CD4-positive, alpha-beta T cell (primary cell): ENCODE measurements at regions of chr11 and their contacts with region 1.

Region 1: GRCh38 chr11:44556735-44557409 is 8.6 kb upstream of the CD82 start:
- DNase-seq: peak; percentile 57 to 83 (median 64)
- ATAC-seq: peak; percentile 71
- H3K4me3 ChIP-seq: no peak overlapping the region
- H3K4me3 Mint-ChIP-seq: no peak overlapping the region
- H3K27ac ChIP-seq: no peak overlapping the region
- H3K27ac Mint-ChIP-seq: peak overlapping the region; percentile 37
- H3K4me1 ChIP-seq: peaks cover 20% of the 10 kb centered on the region
- H3K4me1 Mint-ChIP-seq: peaks cover 35% of the 10 kb centered on the region
- H3K27me3 ChIP-seq: no peaks in the 10 kb centered on the region
- H3K27me3 Mint-ChIP-seq: no peaks in the 10 kb centered on the region
- CTCF ChIP-seq: peak; percentile 86

Region 2: GRCh38 chr11:44611687-44612434 is 55.0 kb after region 1 on chr11:
- CTCF ChIA-PET with region 1: interaction called, 168 read pairs
- POLR2A ChIA-PET with region 1: interaction called, 7 read pairs
- intact Hi-C with region 1: loop called (anchors 1 kb)
- DNase-seq: peak; percentile 19 to 89 (median 62)
- ATAC-seq: peak; percentile 83
- H3K4me3 ChIP-seq: no peak overlapping the region
- H3K4me3 Mint-ChIP-seq: peak overlapping the region; percentile 11
- H3K27ac ChIP-seq: peak overlapping the region; percentile 49 to 66
- H3K27ac Mint-ChIP-seq: peak overlapping the region; percentile 82
- H3K4me1 ChIP-seq: peaks cover 97% of the 10 kb centered on the region
- H3K4me1 Mint-ChIP-seq: peaks cover 84% of the 10 kb centered on the region
- H3K27me3 ChIP-seq: no peaks in the 10 kb centered on the region
- H3K27me3 Mint-ChIP-seq: no peaks in the 10 kb centered on the region
- CTCF ChIP-seq: no peak

Region 3: DNA sequence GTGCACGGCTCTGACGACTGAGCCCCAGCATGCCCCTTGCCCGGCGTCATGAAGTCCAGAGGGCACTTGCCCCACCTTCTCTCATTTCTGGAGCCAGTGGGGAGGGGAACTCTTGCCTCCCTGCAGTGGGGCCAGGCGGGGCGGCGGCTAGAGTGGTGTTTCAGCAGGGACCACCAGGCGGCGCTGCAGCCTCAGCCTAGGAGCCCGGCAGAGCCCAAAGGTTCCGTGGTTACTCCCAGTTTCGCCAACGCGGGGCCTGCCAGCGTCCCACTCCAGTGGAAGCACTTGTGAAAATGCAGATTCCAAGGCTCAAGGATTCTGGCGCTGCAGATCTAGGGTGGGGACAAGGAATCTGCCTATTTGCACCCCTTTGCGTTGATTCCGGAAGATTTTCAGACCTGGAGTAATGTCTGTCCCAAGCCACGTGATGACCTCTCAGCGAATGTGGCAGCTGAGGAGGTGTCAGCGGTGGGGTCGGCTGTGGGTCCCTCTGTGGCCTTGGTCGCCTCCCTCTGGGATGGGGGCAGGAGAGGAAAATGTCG is 64.3 kb after region 1 on chr11:
- CTCF ChIA-PET with region 1: interaction called, 168 read pairs
- POLR2A ChIA-PET with region 1: interaction called, 4 read pairs
- intact Hi-C with region 1: loop called (anchors 1 kb)
- DNase-seq: peak; percentile 30 to 80 (median 60)
- ATAC-seq: peak; percentile 69
- H3K4me3 ChIP-seq: no peak overlapping the region
- H3K4me3 Mint-ChIP-seq: no peak overlapping the region
- H3K27ac ChIP-seq: no peak overlapping the region
- H3K27ac Mint-ChIP-seq: no peak overlapping the region
- H3K4me1 ChIP-seq: peaks cover 38% of the 10 kb centered on the region
- H3K4me1 Mint-ChIP-seq: peaks cover 36% of the 10 kb centered on the region
- H3K27me3 ChIP-seq: no peaks in the 10 kb centered on the region
- H3K27me3 Mint-ChIP-seq: no peaks in the 10 kb centered on the region
- CTCF ChIP-seq: peak; percentile 65

Region 4: GRCh38 chr11:44775366-44775984 is 218.6 kb after region 1 on chr11:
- CTCF ChIA-PET with region 1: interaction called, 7 read pairs
- POLR2A ChIA-PET with region 1: no interaction called
- intact Hi-C with region 1: loop called (anchors 1 to 2 kb)
- DNase-seq: peak; percentile 27 to 79 (median 50)
- ATAC-seq: peak; percentile 37
- H3K4me3 ChIP-seq: no peak overlapping the region
- H3K4me3 Mint-ChIP-seq: no peak overlapping the region
- H3K27ac ChIP-seq: no peak overlapping the region
- H3K27ac Mint-ChIP-seq: no peak overlapping the region
- H3K4me1 ChIP-seq: peaks cover 17% of the 10 kb centered on the region
- H3K4me1 Mint-ChIP-seq: peaks cover 22% of the 10 kb centered on the region
- H3K27me3 ChIP-seq: no peaks in the 10 kb centered on the region
- H3K27me3 Mint-ChIP-seq: peaks cover 6% of the 10 kb centered on the region
- CTCF ChIP-seq: peak; percentile 73

Region 5: GRCh38 chr11:44893846-44894617 is 337.2 kb after region 1 on chr11:
- CTCF ChIA-PET with region 1: no interaction called
- POLR2A ChIA-PET with region 1: no interaction called
- intact Hi-C with region 1: loop called (anchors 1 to 5 kb)
- DNase-seq: peak; percentile 13 to 77 (median 50)
- ATAC-seq: peak; percentile 67
- H3K4me3 ChIP-seq: no peak overlapping the region
- H3K4me3 Mint-ChIP-seq: no peak overlapping the region
- H3K27ac ChIP-seq: no peak overlapping the region
- H3K27ac Mint-ChIP-seq: no peak overlapping the region
- H3K4me1 ChIP-seq: peaks cover 5% of the 10 kb centered on the region
- H3K4me1 Mint-ChIP-seq: no peaks in the 10 kb centered on the region
- H3K27me3 ChIP-seq: no peaks in the 10 kb centered on the region
- H3K27me3 Mint-ChIP-seq: no peaks in the 10 kb centered on the region
- CTCF ChIP-seq: peak; percentile 44

Region 6: GRCh38 chr11:44911029-44911814 is 354.4 kb after region 1 on chr11:
- CTCF ChIA-PET with region 1: interaction called, 4 read pairs
- POLR2A ChIA-PET with region 1: no interaction called
- intact Hi-C with region 1: loop called (anchors 1 kb)
- DNase-seq: peak; percentile 60 to 93 (median 82)
- ATAC-seq: peak; percentile 83
- H3K4me3 ChIP-seq: no peak overlapping the region
- H3K4me3 Mint-ChIP-seq: no peak overlapping the region
- H3K27ac ChIP-seq: no peak overlapping the region
- H3K27ac Mint-ChIP-seq: no peak overlapping the region
- H3K4me1 ChIP-seq: peaks cover 9% of the 10 kb centered on the region
- H3K4me1 Mint-ChIP-seq: peaks cover 7% of the 10 kb centered on the region
- H3K27me3 ChIP-seq: no peaks in the 10 kb centered on the region
- H3K27me3 Mint-ChIP-seq: no peaks in the 10 kb centered on the region
- CTCF ChIP-seq: peak; percentile 77